SK-N-SH (cell line): ENCODE measurements at regions of chr4 and their contacts with region 1.

Region 1: GRCh38 chr4:87848622-87849351 is 16.0 kb downstream of the MEPE start:
- DNase-seq: peak; percentile 58
- H3K4me3 ChIP-seq: peak overlapping the region; percentile 24 to 38; a peak in 3 of 4 replicates
- H3K27ac ChIP-seq: no peak overlapping the region
- H3K4me1 ChIP-seq: peaks cover 0 to 3% of the 10 kb centered on the region in 2 experiments; a peak in 2 of 4 replicates
- H3K27me3 ChIP-seq: no peaks in the 10 kb centered on the region
- CTCF ChIP-seq: peak; percentile 70
- EP300 ChIP-seq: no peak
- RAD21 ChIP-seq: peak; percentile 66

Region 2: GRCh38 chr4:87679449-87680169 is 169.2 kb before region 1 on chr4:
- CTCF ChIA-PET with region 1: interaction called, 75 read pairs
- POLR2A ChIA-PET with region 1: no interaction called
- DNase-seq: peak; percentile 59
- H3K4me3 ChIP-seq: no peak overlapping the region
- H3K27ac ChIP-seq: no peak overlapping the region
- H3K4me1 ChIP-seq: no peaks in the 10 kb centered on the region
- H3K27me3 ChIP-seq: no peaks in the 10 kb centered on the region
- CTCF ChIP-seq: peak; percentile 90
- EP300 ChIP-seq: no peak
- RAD21 ChIP-seq: peak; percentile 91

Region 3: DNA sequence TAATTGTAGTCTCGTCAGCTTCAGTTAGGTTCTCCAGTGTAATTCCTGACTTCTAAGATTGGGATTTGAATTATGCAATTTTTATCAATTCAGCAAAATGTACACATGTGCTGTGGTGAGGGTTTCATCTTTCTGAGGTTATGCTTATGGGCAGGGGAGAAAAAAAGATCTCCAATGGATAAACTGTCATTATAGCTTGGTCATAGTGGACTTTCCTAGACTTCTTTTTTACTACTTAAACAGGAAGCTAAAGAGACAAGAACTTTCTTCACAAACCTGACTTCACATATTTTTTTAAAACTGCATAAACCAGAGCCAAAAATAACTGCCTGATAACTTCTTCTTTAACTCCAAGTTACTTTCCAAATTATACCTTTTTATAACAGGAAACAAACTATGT is 105.0 kb after region 1 on chr4:
- CTCF ChIA-PET with region 1: interaction called, 12 read pairs
- POLR2A ChIA-PET with region 1: no interaction called
- DNase-seq: no peak
- H3K4me3 ChIP-seq: no peak overlapping the region
- H3K27ac ChIP-seq: no peak overlapping the region
- H3K4me1 ChIP-seq: no peaks in the 10 kb centered on the region
- H3K27me3 ChIP-seq: no peaks in the 10 kb centered on the region
- CTCF ChIP-seq: no peak
- EP300 ChIP-seq: no peak
- RAD21 ChIP-seq: no peak

Region 4: GRCh38 chr4:87967193-87967592 is 118.4 kb after region 1 on chr4:
- CTCF ChIA-PET with region 1: interaction called, 182 read pairs
- POLR2A ChIA-PET with region 1: no interaction called
- DNase-seq: no peak
- H3K4me3 ChIP-seq: no peak overlapping the region
- H3K27ac ChIP-seq: no peak overlapping the region
- H3K4me1 ChIP-seq: no peaks in the 10 kb centered on the region; a peak in 1 of 4 replicates
- H3K27me3 ChIP-seq: no peaks in the 10 kb centered on the region
- CTCF ChIP-seq: no peak
- EP300 ChIP-seq: no peak
- RAD21 ChIP-seq: no peak

Region 5: DNA sequence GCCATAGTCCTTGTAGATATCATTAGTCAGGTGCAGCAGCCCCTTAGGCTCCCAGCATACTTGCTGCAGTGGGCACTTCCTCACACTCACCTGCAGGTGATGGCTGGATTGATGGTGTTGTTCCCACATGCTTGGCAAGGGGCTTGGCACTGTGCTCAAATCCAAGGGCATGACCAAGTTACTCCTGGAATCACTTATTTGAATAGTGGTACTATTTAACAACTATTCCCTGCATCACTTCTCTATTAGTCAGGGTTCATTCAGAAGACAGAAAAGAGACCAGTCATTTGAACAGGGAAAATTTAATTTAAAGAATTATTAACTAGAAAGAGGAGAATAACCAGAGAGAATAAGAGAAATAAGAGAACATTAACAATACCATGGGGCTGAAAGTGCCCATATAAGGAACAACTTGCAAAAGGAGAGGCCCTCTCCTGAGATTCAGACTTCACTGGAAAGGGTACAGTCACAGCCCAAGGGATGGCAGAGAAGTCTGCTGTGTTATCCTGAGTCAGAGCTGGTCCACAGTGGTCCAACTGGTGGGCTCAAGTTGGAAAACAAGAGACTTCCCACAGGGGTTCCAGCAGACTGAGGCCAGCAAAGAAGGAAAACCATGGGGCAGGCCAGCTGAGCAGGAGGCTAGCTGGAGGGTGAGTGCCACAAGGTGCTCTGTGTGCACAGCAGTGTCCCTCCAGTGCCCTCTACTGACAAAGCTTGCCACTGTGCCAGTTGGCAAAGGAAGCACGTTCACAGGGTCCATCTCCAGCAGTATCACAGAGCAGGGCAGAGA is 136.5 kb after region 1 on chr4:
- CTCF ChIA-PET with region 1: interaction called, 182 read pairs
- POLR2A ChIA-PET with region 1: no interaction called
- DNase-seq: peak; percentile 67
- H3K4me3 ChIP-seq: no peak overlapping the region
- H3K27ac ChIP-seq: no peak overlapping the region
- H3K4me1 ChIP-seq: no peaks in the 10 kb centered on the region
- H3K27me3 ChIP-seq: no peaks in the 10 kb centered on the region
- CTCF ChIP-seq: peak; percentile 64
- EP300 ChIP-seq: no peak
- RAD21 ChIP-seq: peak; percentile 81